RWPE1 (cell line): ENCODE measurements at regions of chr20 and their contacts with region 1.

Region 1: DNA sequence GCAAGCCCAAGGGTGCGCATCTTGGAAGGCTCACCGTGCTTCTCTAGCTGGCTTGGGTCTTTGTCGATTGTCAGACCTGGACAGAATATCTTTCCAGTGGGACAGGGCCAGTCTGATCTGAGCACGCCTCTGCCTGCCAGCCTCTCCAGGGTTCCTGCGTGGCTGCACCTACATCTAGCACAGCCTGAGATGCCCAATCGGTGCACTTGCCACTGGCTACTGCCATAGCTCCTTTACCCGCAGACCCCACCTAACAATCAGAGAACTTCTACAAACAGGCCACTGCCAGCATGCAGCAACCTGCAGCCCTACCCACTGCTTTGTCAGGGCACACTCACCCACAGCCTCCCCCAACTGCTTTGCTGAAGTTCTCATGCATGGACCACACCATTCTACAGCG is 56.7 kb upstream of the PHACTR3 start:
- DNase-seq: no peak
- H3K27ac ChIP-seq: no peak overlapping the region
- CTCF ChIP-seq: no peak

Region 2: GRCh38 chr20:59560588-59561227 is 13.1 kb after region 1 on chr20:
- CTCF ChIA-PET with region 1: interaction called, 12 read pairs
- POLR2A ChIA-PET with region 1: no interaction called
- DNase-seq: peak; percentile 82
- H3K27ac ChIP-seq: no peak overlapping the region
- CTCF ChIP-seq: peak; percentile 65